Prostate gland (tissue), 2 donors: ENCODE measurements at regions of chr13 and their contacts with region 1.

Region 1: DNA sequence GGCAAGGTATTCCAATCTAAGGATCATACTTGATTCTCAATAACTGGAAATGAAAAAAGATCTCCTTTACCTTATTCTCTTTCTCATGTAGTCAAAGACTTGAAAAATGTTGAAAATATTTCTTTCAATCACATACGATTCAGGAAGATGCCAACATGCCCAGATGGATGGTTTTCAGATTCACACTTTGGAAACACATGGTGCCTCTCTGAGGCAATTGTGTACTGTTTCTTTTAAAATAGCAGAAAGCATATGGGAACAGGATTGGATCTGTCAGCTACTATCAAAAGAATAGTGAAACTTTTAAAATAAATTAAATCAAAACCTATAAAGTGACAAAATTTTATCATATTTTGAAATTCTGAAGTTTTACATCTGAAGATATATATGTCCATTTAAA is 222.4 kb downstream of the SPRY2 start:
- DNase-seq: no peak
- H3K4me3 ChIP-seq: no peak overlapping the region
- H3K27ac ChIP-seq: no peak overlapping the region
- H3K4me1 ChIP-seq: no peaks in the 10 kb centered on the region
- H3K27me3 ChIP-seq: no peaks in the 10 kb centered on the region
- CTCF ChIP-seq: no peak
- POLR2A ChIP-seq: no peak

Region 2: DNA sequence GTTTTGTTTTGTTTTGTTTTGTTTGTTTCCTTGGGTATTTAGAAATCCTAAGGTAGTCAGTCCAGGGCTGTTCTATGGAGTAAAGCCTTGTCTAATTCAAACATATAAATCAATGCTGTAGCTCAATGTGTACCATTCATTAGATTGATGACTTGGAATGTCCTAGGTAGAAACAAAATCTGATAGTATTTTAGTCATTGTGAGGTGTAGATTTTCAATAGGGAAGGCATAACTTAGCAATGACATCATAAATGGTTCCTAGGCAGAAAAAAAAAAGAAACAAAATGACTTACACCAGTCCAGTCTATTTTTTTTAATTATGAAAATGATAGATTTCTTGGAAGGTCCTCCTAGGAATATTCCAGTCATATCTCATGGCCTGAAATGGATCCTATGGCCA is 32.5 kb after region 1 on chr13:
- intact Hi-C with region 1: loop called (anchors 2 kb)
- DNase-seq: no peak
- H3K4me3 ChIP-seq: no peak overlapping the region
- H3K27ac ChIP-seq: no peak overlapping the region
- H3K4me1 ChIP-seq: no peaks in the 10 kb centered on the region
- H3K27me3 ChIP-seq: no peaks in the 10 kb centered on the region
- CTCF ChIP-seq: no peak
- POLR2A ChIP-seq: no peak